Heart right ventricle (tissue), 16 donors: ENCODE measurements at regions of chr20 and their contacts with region 1.

Region 1: GRCh38 chr20:48657475-48658470 is 170.0 kb downstream of the PREX1 start:
- DNase-seq: peak in 1 of 2 donors; percentile 69
- ATAC-seq: peak; percentile 75 to 92 (median 86)
- H3K4me3 ChIP-seq: no peak overlapping the region
- H3K27ac ChIP-seq: no peak overlapping the region
- H3K4me1 ChIP-seq: peaks cover 0 to 19% (median 0%) of the 10 kb centered on the region in 9 donors
- H3K27me3 ChIP-seq: no peaks in the 10 kb centered on the region
- CTCF ChIP-seq: peak; percentile 92 to 98 (median 96)

Region 2: DNA sequence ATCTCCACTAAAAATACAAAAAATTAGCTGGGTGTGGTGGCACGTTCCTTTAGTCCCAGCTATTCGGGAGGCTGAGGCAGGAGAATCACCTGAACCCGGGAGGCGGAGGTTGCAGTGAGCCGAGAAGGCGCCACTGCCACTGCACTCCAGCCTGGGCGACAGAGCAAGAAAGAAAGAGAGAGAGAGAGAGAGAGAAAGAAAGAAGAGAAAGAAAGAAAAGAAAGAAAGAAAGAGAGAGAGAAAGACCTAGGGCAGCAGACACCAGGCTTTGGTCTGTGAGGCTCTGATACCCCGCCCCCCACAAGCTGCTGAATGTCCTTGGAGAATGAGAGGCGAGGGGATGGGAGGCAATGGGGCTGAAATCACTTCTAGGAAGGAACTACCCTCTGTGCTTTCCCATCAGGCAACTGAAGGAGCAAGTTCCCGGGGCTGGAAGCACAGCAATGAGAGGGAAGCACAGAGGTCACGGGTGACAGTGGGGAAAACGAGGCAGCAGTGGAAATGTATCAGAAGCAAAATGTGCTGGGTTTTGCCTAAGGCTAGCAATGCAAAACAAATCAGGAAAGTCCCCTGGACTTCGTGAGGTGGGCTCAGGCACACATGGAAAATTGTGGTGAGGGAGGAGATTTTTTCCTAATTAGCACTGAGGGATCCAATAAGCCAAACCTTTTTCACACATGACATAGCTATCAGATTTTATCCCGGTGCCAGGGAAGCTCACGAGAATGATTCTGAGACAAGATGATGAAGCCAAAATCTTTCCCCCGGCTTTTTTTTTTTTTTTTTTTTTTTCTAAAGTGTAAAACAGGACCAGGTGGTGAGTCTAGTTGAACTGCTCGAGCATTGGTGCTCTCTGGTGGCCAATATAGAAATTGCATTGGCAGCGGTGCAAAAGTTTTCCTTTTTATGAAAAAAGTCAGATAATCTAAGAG is 246.9 kb after region 1 on chr20:
- intact Hi-C with region 1: loop called (anchors 1 to 2 kb)
- DNase-seq: peak; percentile 21 to 56
- ATAC-seq: peak in 7 of 8 donors; percentile 40 to 75 (median 59)
- H3K4me3 ChIP-seq: no peak overlapping the region
- H3K27ac ChIP-seq: no peak overlapping the region
- H3K4me1 ChIP-seq: peaks cover 0 to 12% (median 5%) of the 10 kb centered on the region in 9 donors
- H3K27me3 ChIP-seq: peaks cover 0 to 3% (median 0%) of the 10 kb centered on the region in 7 donors
- CTCF ChIP-seq: peak; percentile 80 to 89 (median 85)